GM12878 (cell line): ENCODE measurements at regions of chr17 and their contacts with region 1.

Region 1: GRCh38 chr17:40121181-40122135 is at the start of gene MSL1:
- DNase-seq: no peak
- ATAC-seq: peak; percentile 78
- H3K4me3 ChIP-seq: peak within 1 kb of the TSS; percentile 99
- H3K27ac ChIP-seq: peak within 1 kb of the TSS; percentile 71
- H3K4me1 ChIP-seq: peaks cover 6% of the 10 kb centered on the region
- H3K27me3 ChIP-seq: no peaks in the 10 kb centered on the region
- CTCF ChIP-seq: no peak
- EP300 ChIP-seq: no peak
- POLR2A ChIP-seq: peak; percentile 76
- RAD21 ChIP-seq: no peak
- polyA plus RNA-seq, gene MSL1: 11.1 to 18.0 TPM

Region 2: DNA sequence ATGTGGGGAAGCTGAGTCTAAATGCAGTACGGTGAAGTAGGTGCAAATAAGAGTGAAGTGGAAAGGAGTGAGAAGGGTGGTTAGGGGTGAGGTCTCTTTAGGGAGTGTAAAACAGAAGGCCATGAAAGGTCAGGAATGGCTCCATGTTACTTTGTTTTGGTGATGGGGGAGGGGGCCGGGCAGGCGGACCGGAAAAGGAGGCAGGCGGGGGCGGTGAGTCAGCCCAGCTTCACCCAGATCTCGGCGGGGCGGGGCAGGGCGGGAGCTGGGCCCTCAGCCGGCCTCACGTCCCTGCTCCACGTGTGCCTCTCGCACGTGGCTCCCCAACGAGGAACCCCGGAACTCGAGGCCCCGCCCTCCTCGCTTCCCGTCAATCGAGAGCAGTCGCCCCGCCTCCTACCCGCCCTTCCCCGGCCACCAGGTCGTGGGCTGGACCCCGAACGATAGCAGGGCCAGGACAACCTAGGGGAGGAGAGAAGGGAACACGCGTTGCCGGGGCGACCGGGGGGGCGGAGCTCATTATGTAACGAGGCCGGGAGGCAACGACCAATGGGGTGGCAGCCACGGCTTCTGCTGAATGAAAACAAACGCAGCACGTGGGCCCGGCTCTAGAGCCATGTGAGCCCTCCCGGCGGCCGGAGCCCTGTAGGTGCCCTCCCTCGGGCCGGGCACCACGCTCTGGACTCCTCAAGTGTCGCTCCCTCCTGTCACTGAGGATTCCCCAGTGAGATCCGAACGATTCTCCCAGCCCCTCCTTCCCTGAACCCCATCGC is 22.4 kb before region 1 on chr17:
- CTCF ChIA-PET with region 1: no interaction called
- POLR2A ChIA-PET with region 1: interaction called, 11 read pairs
- RAD21 ChIA-PET with region 1: interaction called, 3 read pairs
- SMC1A ChIA-PET with region 1: interaction called, 3 read pairs
- in situ Hi-C with region 1: no loop called
- intact Hi-C with region 1: no loop called
- DNase-seq: peak; percentile 97
- ATAC-seq: peak; percentile 80
- H3K4me3 ChIP-seq: peak overlapping the region; percentile 90
- H3K27ac ChIP-seq: peak overlapping the region; percentile 88
- H3K4me1 ChIP-seq: peaks cover 64% of the 10 kb centered on the region
- H3K27me3 ChIP-seq: no peaks in the 10 kb centered on the region
- CTCF ChIP-seq: no peak
- EP300 ChIP-seq: no peak
- POLR2A ChIP-seq: no peak; the same call in 1 of the 2 replicates
- RAD21 ChIP-seq: no peak

Region 3: DNA sequence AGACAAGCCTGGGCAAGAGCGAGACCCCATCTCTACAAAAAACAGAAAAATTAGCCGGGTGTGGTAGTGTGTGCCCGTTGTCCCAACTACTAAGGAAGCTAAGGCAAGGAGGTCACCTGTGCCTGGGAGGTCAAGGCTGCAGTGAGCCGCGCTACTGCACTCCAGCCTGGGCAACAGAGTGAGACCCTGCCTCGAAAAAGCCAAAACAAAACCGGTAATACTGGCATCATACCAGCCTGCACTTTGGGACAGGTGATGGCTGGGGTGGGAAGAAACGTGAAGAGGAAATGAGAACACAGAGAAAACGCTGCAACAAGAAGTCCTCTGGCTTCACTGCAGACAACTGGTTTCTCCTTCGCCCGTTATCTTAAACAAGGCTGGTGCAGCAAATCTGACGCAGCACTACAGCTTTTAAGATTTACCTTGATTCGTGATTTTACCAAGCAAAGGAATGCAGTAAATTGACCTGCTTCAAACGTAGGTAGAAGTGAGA is 18.2 kb after region 1 on chr17:
- CTCF ChIA-PET with region 1: interaction called, 23 read pairs
- POLR2A ChIA-PET with region 1: interaction called, 45 read pairs
- RAD21 ChIA-PET with region 1: interaction called, 21 read pairs
- SMC1A ChIA-PET with region 1: interaction called, 24 read pairs
- in situ Hi-C with region 1: no loop called
- intact Hi-C with region 1: loop called (anchors 1 kb)
- DNase-seq: no peak
- ATAC-seq: peak; percentile 20
- H3K4me3 ChIP-seq: peak overlapping the region; percentile 76
- H3K27ac ChIP-seq: peak overlapping the region; percentile 97
- H3K4me1 ChIP-seq: peaks cover 2% of the 10 kb centered on the region; the same call in 1 of the 2 replicates
- H3K27me3 ChIP-seq: no peaks in the 10 kb centered on the region
- CTCF ChIP-seq: no peak
- EP300 ChIP-seq: no peak
- POLR2A ChIP-seq: no peak
- RAD21 ChIP-seq: no peak

Region 4: GRCh38 chr17:40157973-40158372 is 36.5 kb after region 1 on chr17:
- CTCF ChIA-PET with region 1: interaction called, 3 read pairs
- POLR2A ChIA-PET with region 1: interaction called, 4 read pairs
- RAD21 ChIA-PET with region 1: interaction called, 3 read pairs
- SMC1A ChIA-PET with region 1: interaction called, 11 read pairs
- in situ Hi-C with region 1: no loop called
- intact Hi-C with region 1: no loop called
- DNase-seq: no peak
- ATAC-seq: no peak
- H3K4me3 ChIP-seq: no peak overlapping the region
- H3K27ac ChIP-seq: 0 out of 2 replicates have a peak overlapping the region, but pooled peaks have one; percentile 19
- H3K4me1 ChIP-seq: peaks cover 12% of the 10 kb centered on the region
- H3K27me3 ChIP-seq: no peaks in the 10 kb centered on the region
- CTCF ChIP-seq: no peak
- EP300 ChIP-seq: no peak
- POLR2A ChIP-seq: no peak
- RAD21 ChIP-seq: no peak